ENCODE measurements at regions of chr11 and their contacts with region 1.

Region 1: DNA sequence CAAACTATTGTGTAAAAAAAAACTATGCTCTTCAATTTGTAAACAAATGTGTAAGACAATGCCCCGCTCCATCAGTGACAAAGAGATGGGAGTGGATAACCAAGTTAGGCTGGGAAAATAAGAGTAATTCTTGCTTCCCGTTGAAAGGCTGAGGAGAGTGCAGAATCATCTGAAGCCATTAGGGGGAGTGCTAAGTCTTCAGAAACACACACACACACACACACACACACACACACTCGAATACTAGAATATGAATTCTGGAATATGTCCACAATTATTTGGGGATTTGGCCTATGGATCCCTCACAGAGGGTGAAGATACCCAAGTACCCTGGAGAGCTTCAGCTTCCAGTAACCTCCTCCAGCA is 27.8 kb upstream of the ROBO3 start:
- DNase-seq: no peak
- H3K4me3 ChIP-seq: no peak overlapping the region
- H3K27ac ChIP-seq: peak overlapping the region in 1 of 4 donors; percentile 68
- H3K4me1 ChIP-seq: peaks cover 15 to 28% (median 24%) of the 10 kb centered on the region in 4 donors
- H3K27me3 ChIP-seq: peaks cover 15 to 60% (median 39%) of the 10 kb centered on the region in 4 donors
- CTCF ChIP-seq: no peak
- EP300 ChIP-seq: no peak
- POLR2A ChIP-seq: no peak

Region 2: DNA sequence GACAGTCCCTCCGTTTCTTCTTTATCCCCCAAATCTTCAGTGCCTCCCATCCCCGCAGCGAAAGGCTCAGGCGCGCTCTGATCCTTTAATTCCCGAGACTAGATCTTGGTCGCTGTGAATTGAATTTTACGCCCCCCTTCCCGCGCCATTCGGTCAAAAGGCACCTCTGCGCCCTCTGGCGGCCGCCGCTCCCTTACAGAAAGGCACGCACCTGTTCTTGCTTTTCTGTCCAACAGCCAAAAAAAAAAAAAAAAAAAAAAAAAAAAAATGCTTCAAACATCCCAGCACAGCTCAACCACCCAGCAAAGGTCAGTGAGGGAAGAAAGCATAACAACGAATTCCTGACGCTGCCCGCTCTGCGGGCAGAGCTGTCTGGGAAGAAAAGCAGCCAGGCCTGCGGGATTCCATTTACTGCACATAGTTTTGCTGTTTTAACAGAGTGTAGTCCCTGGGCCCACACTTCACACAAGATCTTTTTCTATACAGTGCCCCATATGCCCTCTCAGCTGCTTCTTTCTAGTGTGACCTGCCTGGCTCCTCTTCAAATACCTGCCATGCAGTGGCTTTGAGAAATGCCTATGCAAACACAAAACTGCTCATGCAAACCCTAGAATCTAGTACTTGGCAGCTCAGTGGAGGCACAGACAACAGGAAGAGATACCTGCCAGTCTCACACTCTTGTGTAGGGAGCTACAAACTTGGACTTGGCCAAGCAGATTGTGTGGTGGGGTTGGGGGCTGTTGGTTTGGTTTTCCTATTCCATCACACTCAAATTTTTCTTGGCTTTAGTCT is 74.1 kb before region 1 on chr11:
- intact Hi-C with region 1: loop called (anchors 5 kb)
- DNase-seq: peak; percentile 93
- H3K4me3 ChIP-seq: peak overlapping the region; percentile 52 to 65 (median 54)
- H3K27ac ChIP-seq: peak overlapping the region; percentile 69 to 82 (median 82)
- H3K4me1 ChIP-seq: peaks cover 26 to 53% (median 43%) of the 10 kb centered on the region in 4 donors
- H3K27me3 ChIP-seq: peaks cover 5 to 48% (median 38%) of the 10 kb centered on the region in 4 donors
- CTCF ChIP-seq: peak; percentile 60 to 76 (median 63)
- EP300 ChIP-seq: no peak
- POLR2A ChIP-seq: no peak

Region 3: DNA sequence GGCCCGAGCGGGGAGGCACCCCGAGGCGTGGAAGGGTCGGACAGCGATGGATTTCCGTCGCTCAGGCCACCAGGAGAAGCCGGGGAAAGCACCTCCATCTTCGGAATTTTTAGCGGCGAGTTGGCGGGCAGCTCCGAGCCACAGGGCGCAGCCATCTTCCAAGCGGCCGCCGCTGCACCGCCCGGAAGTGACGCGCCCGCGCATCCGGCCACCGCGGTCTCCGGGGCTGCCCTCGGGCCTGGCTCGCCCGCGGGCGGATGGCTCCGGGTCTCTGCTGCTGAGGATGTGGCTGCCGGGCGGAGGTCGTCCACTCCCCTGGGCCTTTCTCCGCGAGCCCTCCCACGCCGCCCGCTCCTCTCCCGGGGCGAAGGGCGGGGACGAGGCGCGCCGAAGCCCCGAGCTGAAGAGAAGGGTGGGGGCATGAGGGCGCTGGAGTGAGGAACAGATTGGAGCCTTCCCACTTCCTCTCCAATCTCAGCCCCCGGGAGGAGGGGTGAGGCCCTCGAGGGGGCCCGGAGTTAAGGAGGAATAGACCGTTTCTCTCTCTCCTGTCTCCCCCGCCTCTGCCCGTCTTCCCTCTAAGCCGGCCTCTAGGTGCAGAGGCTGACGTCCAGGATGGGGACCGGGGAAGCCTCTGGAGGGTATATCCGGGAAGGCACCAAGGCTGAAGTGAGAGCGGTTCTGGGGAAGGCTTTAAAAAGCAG is 37.1 kb before region 1 on chr11 and contains the start of gene MSANTD2:
- intact Hi-C with region 1: loop called (anchors 5 kb)
- DNase-seq: peak; percentile 94
- H3K4me3 ChIP-seq: peak within 1 kb of the TSS; percentile 93 to 97 (median 94)
- H3K27ac ChIP-seq: peak within 1 kb of the TSS; percentile 97 to 98 (median 98)
- H3K4me1 ChIP-seq: peaks cover 27 to 47% (median 35%) of the 10 kb centered on the region in 4 donors
- H3K27me3 ChIP-seq: no peaks in the 10 kb centered on the region
- CTCF ChIP-seq: no peak
- EP300 ChIP-seq: no peak
- POLR2A ChIP-seq: peak; percentile 81
- total RNA-seq, gene MSANTD2: 9.6 to 14.0 (median 12.1) TPM